ENCODE measurements at regions of chr15 and their contacts with region 1.

Region 1: DNA sequence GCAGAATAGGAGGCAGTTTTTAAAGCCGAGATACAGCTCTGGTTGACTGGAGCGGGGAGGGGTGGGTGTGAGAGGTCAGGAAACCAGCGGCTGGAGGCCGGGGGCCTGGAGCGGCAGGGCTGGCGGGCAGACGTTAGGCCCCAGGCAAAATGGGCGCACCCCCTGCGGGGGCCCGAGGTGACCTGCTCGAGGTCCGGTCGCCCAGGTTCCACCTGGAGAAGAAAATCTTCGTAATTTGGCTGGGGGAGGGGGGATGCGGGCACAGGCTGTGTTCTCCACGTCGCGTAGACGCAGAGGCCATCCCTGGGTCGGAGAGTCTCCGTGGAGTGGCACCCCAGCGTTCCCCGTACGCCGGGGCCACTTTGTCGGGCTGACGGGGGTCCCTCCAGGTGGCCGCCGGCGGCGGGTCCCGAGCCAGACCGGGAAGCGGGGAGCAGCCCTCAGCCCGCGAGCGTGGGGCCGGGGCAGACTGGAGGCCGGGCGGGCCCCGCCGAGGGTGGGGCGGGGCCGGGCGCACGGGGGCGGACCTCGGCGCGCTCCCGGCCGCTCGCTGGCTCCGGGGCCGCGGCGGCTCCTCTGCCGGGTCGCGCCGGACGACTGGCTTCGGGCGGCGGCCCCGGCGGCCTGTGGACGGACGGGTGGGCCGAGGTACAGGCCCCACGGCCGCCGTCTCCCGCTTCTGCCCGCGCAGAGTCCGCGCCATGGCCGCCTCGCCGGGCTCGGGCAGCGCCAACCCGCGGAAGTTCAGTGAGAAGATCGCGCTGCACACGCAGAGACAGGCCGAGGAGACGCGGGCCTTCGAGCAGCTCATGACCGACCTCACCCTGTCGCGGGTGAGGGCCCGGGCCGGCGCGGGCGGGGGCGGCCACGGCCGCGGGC is at the start of gene CRTC3:
- DNase-seq: no peak
- H3K4me3 ChIP-seq: peak within 1 kb of the TSS; percentile 69 to 84
- H3K27ac ChIP-seq: peak within 1 kb of the TSS; percentile 91
- H3K4me1 ChIP-seq: peaks cover 34% of the 10 kb centered on the region
- H3K27me3 ChIP-seq: no peaks in the 10 kb centered on the region
- CTCF ChIP-seq: no peak
- POLR2A ChIP-seq: peak in 1 of 2 donors; percentile 71
- total RNA-seq, gene CRTC3: 43.5 TPM

Region 2: GRCh38 chr15:90286678-90287077 is 242.9 kb before region 1 on chr15:
- intact Hi-C with region 1: no loop called
- DNase-seq: no peak
- H3K4me3 ChIP-seq: no peak overlapping the region
- H3K27ac ChIP-seq: no peak overlapping the region
- H3K4me1 ChIP-seq: peaks cover 16% of the 10 kb centered on the region
- H3K27me3 ChIP-seq: no peaks in the 10 kb centered on the region
- CTCF ChIP-seq: no peak
- POLR2A ChIP-seq: no peak

Region 3: GRCh38 chr15:90603893-90604292 is 74.3 kb after region 1 on chr15:
- intact Hi-C with region 1: loop called (anchors 10 kb)
- DNase-seq: no peak
- H3K4me3 ChIP-seq: no peak overlapping the region
- H3K27ac ChIP-seq: no peak overlapping the region
- H3K4me1 ChIP-seq: peaks cover 2% of the 10 kb centered on the region
- H3K27me3 ChIP-seq: no peaks in the 10 kb centered on the region
- CTCF ChIP-seq: peak in 1 of 3 experiments; percentile 35
- POLR2A ChIP-seq: no peak